Heart left ventricle (tissue), 16 donors: ENCODE measurements at regions of chr17 and their contacts with region 1.

Region 1: DNA sequence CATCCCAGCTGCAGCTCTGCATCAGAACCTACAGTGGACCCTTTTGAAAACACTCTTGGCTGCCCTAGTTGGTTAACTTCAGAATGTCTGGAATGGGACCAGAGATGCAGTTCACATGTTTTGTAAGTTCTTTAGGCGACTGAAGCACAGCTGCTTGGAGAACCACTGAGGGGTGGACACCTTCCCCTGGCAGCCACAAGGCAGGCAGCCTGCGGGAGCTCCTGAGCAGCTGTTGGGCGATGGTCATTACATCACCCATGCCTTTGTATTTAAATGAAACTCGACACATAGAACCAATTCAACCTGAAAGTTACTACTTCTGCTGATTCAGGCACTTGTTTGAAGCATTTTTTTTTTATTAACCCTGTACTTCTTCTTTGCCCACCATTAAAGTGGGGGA is 151.5 kb downstream of the LGALS9B start:
- DNase-seq: no peak
- ATAC-seq: no peak
- H3K4me3 ChIP-seq: no peak overlapping the region
- H3K27ac ChIP-seq: no peak overlapping the region
- H3K4me1 ChIP-seq: peaks cover 0 to 6% (median 0%) of the 10 kb centered on the region in 12 donors
- H3K27me3 ChIP-seq: no peaks in the 10 kb centered on the region
- CTCF ChIP-seq: no peak
- POLR2A ChIP-seq: no peak

Region 2: GRCh38 chr17:19979917-19980770 is 335.7 kb before region 1 on chr17:
- intact Hi-C with region 1: loop called in 2 of 10 experiments (anchors 5 to 10 kb)
- DNase-seq: peak; percentile 22 to 83 (median 42)
- ATAC-seq: peak in 3 of 4 donors; percentile 5 to 14 (median 12)
- H3K4me3 ChIP-seq: peak overlapping the region in 4 of 12 donors; percentile 1 to 13 (median 10)
- H3K27ac ChIP-seq: peak overlapping the region in 7 of 12 donors; percentile 10 to 99 (median 24)
- H3K4me1 ChIP-seq: peaks cover 0 to 47% (median 16%) of the 10 kb centered on the region in 12 donors
- H3K27me3 ChIP-seq: no peaks in the 10 kb centered on the region
- CTCF ChIP-seq: no peak
- POLR2A ChIP-seq: no peak

Region 3: GRCh38 chr17:19986941-19987861 is 328.6 kb before region 1 on chr17:
- intact Hi-C with region 1: loop called in 4 of 10 experiments (anchors 5 to 10 kb)
- DNase-seq: no peak
- ATAC-seq: no peak
- H3K4me3 ChIP-seq: no peak overlapping the region
- H3K27ac ChIP-seq: no peak overlapping the region
- H3K4me1 ChIP-seq: no peaks in the 10 kb centered on the region
- H3K27me3 ChIP-seq: no peaks in the 10 kb centered on the region
- CTCF ChIP-seq: no peak
- POLR2A ChIP-seq: no peak

Region 4: DNA sequence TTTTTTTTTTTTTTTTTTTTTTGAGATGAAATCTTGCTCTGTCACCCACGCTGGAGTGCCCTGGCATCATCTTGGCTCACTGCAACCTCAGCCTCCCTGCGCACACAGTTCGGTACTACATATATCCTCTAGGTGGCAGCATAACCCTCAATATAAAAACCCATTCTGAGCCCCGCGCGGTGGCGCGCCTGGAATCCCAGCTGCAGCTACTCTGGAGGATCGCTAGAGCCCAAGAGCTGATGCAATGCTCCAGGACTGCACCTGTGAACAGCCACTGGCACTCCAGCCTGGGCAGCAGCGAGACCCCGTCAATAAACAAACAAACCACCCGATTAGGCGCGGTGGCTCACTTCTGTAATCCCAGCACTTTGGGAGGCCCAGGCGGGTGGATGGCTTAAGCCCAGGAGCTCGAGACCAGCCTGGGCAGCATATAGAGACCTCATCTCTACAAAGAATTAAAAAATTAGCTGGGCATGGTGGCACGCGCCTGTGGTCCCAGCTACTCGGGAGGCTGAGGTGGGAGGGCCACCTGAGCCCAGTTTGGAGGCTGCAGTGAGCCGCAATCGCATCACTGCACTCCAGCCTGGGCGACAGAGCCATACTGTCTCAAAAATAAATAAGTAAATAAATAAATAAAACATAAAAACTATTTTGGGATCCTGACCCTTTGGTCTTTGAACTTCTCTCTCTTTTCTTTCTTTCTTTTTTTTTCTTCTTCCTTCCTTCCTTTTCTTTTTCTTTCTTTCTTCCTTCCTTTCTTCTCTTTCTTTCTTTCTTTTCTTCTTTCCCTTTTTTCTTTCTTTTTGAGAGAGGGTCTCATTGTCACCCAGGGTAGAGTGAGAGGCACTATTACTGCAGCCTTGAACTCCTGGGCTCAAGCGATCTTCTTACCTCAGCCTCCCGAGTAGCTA is 322.8 kb before region 1 on chr17:
- intact Hi-C with region 1: loop called in 4 of 10 experiments (anchors 5 to 10 kb)
- DNase-seq: peak; percentile 82 to 94 (median 87)
- ATAC-seq: peak; percentile 95 to 99 (median 99)
- H3K4me3 ChIP-seq: peak overlapping the region in 2 of 12 donors; percentile 8 to 13
- H3K27ac ChIP-seq: no peak overlapping the region
- H3K4me1 ChIP-seq: peaks cover 0 to 11% (median 1%) of the 10 kb centered on the region in 12 donors
- H3K27me3 ChIP-seq: no peaks in the 10 kb centered on the region
- CTCF ChIP-seq: peak; percentile 66 to 82 (median 76)
- POLR2A ChIP-seq: no peak

Region 5: DNA sequence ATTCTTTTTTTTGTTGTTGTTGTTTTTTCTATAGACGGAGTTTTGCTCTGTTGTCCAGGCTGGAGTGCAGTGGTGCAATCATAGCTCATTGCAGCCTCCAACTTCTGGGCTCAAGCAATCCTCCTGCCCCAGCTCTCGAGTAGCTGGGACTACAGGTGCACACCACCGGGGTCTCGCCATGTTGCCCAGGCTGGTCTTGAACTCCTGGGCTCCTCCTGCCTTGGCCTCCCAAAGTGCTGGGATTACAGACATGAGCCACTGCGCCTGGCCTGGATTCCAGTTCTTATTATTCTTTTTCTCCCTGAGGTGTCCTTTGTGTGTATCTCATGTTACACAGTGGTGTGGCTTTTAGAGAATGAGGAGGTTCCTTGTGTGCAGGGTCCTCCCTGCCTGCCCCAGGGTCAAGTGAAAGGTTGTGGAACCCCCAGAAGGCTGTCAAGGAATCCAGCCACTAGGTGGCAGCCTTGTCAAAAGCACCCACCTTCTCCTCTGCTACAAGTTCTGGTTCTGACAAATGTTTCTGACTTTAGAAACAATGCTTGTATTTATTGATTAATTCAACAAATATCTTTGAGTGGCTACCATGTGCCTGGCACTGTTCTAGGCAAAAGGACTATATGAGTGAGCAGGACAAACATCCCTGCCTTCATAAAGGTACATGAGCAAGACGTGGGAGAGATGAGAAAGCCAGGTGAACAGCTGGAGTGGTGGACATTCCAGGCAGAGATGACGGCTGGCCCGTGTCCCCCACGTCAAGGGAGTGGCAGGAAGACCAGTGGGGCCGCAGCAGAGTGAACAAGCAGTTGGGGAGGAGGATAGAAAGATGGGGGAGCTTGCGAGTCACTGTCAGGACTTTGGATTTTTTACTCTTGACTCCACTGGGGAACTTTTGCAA is 194.2 kb before region 1 on chr17:
- intact Hi-C with region 1: loop called (anchors 5 to 10 kb)
- DNase-seq: peak in 4 of 5 donors; percentile 45 to 57 (median 49)
- ATAC-seq: peak; percentile 41 to 80 (median 68)
- H3K4me3 ChIP-seq: no peak overlapping the region
- H3K27ac ChIP-seq: no peak overlapping the region
- H3K4me1 ChIP-seq: peaks cover 0 to 28% (median 7%) of the 10 kb centered on the region in 12 donors
- H3K27me3 ChIP-seq: no peaks in the 10 kb centered on the region
- CTCF ChIP-seq: peak; percentile 76 to 94 (median 88)
- POLR2A ChIP-seq: no peak

Region 6: GRCh38 chr17:20128036-20128667 is 187.7 kb before region 1 on chr17:
- intact Hi-C with region 1: loop called (anchors 5 to 10 kb)
- DNase-seq: no peak
- ATAC-seq: peak in 1 of 4 donors; percentile 42
- H3K4me3 ChIP-seq: no peak overlapping the region
- H3K27ac ChIP-seq: no peak overlapping the region
- H3K4me1 ChIP-seq: peaks cover 0 to 9% (median 0%) of the 10 kb centered on the region in 12 donors
- H3K27me3 ChIP-seq: no peaks in the 10 kb centered on the region
- CTCF ChIP-seq: no peak
- POLR2A ChIP-seq: no peak

Region 7: DNA sequence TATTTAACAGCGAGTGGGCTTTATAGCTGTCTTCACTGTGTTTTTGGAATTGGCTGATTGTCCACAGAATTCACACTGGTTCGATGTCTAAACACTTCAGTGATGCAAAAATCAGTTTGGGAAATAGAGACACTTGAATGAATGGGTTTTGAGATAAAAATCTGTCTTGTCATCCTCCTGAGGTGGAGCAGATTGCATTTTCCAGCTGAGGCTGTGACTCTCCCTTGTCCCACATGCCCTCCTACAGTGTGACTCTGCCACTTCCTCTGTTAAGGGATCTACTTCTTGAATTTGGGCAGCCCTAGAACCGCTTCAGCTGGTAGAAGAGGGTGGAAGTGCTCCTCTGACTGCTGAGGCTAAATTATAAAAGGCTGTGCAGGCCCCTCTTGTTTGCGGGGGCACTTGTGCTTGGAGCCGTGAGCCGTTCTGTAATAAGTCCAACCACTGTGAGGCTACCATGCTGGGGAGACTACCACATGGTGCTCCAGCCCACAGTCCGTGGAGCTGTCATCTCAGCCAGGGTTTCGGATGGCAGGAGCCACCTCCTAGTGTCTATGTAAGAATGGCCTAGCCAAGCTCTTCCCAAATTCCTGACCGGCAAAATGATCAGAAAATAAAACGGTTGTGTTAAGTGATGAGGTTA is 130.7 kb before region 1 on chr17:
- intact Hi-C with region 1: no loop called
- DNase-seq: no peak
- ATAC-seq: peak in 2 of 4 donors; percentile 18 to 41
- H3K4me3 ChIP-seq: no peak overlapping the region
- H3K27ac ChIP-seq: peak overlapping the region in 1 of 12 donors; percentile 51
- H3K4me1 ChIP-seq: peaks cover 0 to 16% (median 0%) of the 10 kb centered on the region in 12 donors
- H3K27me3 ChIP-seq: no peaks in the 10 kb centered on the region
- CTCF ChIP-seq: no peak
- POLR2A ChIP-seq: no peak

Region 8: GRCh38 chr17:20234276-20234675 is 81.5 kb before region 1 on chr17:
- intact Hi-C with region 1: loop called in 9 of 10 experiments (anchors 5 to 10 kb)
- DNase-seq: no peak
- ATAC-seq: no peak
- H3K4me3 ChIP-seq: no peak overlapping the region
- H3K27ac ChIP-seq: no peak overlapping the region
- H3K4me1 ChIP-seq: peaks cover 0 to 4% (median 0%) of the 10 kb centered on the region in 12 donors
- H3K27me3 ChIP-seq: no peaks in the 10 kb centered on the region
- CTCF ChIP-seq: no peak
- POLR2A ChIP-seq: no peak